Activated T-helper 1 cell treated with anti-CD3 and anti-CD28 coated beads, Interleukin-12 subunit alpha, Interleukin-12 subunit beta, Interleukin-2, Interleukin-4 antibody, amounts not matched to agents 30 ng/mL and 10 ng/mL and 1 ng/mL, durations not matched to agents 14 hours and 24 hours and 36 hours (primary cell): ENCODE measurements at regions of chrX and their contacts with region 1.

Region 1: DNA sequence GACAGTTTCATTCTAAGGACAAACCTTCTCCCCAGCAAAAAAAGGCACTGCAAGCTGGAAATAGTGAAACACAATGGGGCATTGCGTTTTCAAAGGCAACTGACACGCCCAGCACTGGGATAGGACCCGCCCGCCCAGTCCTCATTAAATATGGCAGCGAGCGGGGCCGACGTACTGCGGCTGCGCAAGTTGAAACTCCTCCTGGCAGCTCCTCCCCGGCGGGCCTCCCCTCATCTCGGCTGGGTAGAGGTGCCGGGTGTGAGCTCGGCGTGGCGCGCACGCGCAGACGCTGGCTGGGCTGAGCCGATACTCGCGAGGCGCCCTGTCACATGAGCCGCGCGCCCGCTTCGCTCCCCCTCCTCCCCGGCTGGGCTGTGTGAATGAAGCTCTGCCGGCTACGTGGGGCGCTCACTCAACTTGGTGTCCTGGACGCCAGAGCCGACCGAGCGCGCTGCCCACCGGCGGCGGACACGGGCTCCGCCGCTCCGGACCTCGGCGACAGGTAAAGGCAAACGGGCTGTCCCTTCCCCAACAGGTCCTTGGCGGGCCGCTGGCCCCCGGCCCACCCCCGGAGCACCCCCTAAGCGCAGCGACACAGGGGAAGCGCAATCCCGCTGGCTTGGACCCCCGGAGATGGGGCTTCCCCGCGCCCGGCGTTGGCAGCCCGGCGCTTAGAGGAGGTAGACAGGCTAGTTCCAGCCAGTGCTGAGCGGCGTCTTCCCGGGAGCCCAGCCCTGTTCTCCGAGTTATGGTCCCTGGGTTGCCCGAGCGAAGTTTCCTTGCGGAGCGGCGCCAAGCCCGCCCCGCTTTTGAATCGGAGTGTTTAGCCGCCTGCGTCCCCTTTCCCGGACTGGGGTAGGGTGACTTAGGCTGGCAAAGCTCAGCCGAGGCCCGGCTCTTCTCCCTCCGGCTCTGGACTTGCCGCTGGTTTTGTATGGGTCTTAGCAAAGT is at the start of gene CLCN5:
- DNase-seq: peak; percentile 91
- H3K4me3 Mint-ChIP-seq: peak within 1 kb of the TSS; percentile 84
- H3K27ac Mint-ChIP-seq: peak within 1 kb of the TSS; percentile 58
- H3K4me1 Mint-ChIP-seq: peaks cover 12% of the 10 kb centered on the region
- H3K27me3 Mint-ChIP-seq: peaks cover 2% of the 10 kb centered on the region
- total RNA-seq, gene CLCN5: 2.8 and 5.5 TPM in 2 replicates

Region 2: GRCh38 chrX:50204364-50204899 is 281.9 kb after region 1 on chrX and contains the start of gene CCNB3:
- intact Hi-C with region 1: loop called (anchors 1 kb)
- DNase-seq: peak; percentile 60
- H3K4me3 Mint-ChIP-seq: peak within 1 kb of the TSS; percentile 86
- H3K27ac Mint-ChIP-seq: peak within 1 kb of the TSS; percentile 94
- H3K4me1 Mint-ChIP-seq: peaks cover 17% of the 10 kb centered on the region
- H3K27me3 Mint-ChIP-seq: no peaks in the 10 kb centered on the region
- total RNA-seq, gene CCNB3: 0.64 and 0.80 TPM in 2 replicates

Region 3: GRCh38 chrX:50343917-50344316 is 421.4 kb after region 1 on chrX:
- intact Hi-C with region 1: no loop called
- DNase-seq: no peak
- H3K4me3 Mint-ChIP-seq: no peak overlapping the region
- H3K27ac Mint-ChIP-seq: no peak overlapping the region
- H3K4me1 Mint-ChIP-seq: no peaks in the 10 kb centered on the region
- H3K27me3 Mint-ChIP-seq: no peaks in the 10 kb centered on the region